ENCODE measurements at regions of chr9 and their contacts with region 1.

Region 1: GRCh38 chr9:4984621-4985385 is at the start of gene JAK2:
- DNase-seq: peak; percentile 79
- ATAC-seq: peak; percentile 83
- H3K4me3 ChIP-seq: peak within 1 kb of the TSS; percentile 76
- H3K27ac ChIP-seq: peak within 1 kb of the TSS; percentile 89
- H3K4me1 ChIP-seq: peaks cover 26% of the 10 kb centered on the region
- H3K27me3 ChIP-seq: no peaks in the 10 kb centered on the region
- CTCF ChIP-seq: peak in 2 of 3 experiments; percentile 44 to 57; a peak in 3 of 6 replicates
- EP300 ChIP-seq: no peak
- POLR2A ChIP-seq: peak; percentile 93
- RAD21 ChIP-seq: peak; percentile 24
- polyA plus RNA-seq, gene JAK2: 4.1 to 4.9 TPM

Region 2: DNA sequence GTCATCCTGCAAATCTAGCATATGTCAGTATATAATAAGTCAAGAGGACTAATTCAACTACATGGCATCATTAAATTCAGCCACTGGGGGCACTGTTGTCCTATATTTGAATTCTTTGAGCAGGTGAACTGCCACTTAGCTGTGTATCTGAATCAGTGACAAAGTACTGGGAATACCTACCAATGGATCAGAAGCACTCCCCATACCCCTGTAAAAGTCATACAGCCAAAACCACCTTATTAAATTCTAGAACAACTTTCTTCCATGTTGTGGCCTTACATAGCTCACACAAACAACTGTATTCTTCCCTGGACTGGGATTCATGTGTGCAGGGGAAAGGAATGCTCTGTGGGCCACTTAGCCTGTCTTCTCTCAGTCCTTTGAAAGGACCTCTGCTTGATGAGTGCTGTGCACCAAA is 380.1 kb before region 1 on chr9:
- CTCF ChIA-PET with region 1: no interaction called
- POLR2A ChIA-PET with region 1: no interaction called
- RAD21 ChIA-PET with region 1: interaction called, 3 read pairs
- SMC1A ChIA-PET with region 1: interaction called, 4 read pairs
- in situ Hi-C with region 1: no loop called
- intact Hi-C with region 1: loop called (anchors 2 kb)
- DNase-seq: peak; percentile 50
- ATAC-seq: peak; percentile 97
- H3K4me3 ChIP-seq: no peak overlapping the region
- H3K27ac ChIP-seq: no peak overlapping the region
- H3K4me1 ChIP-seq: no peaks in the 10 kb centered on the region
- H3K27me3 ChIP-seq: no peaks in the 10 kb centered on the region
- CTCF ChIP-seq: peak; percentile 50 to 75 (median 62)
- EP300 ChIP-seq: no peak
- POLR2A ChIP-seq: no peak
- RAD21 ChIP-seq: peak; percentile 77

Region 3: GRCh38 chr9:4792572-4793458 is 192.0 kb before region 1 on chr9 and contains the start of gene RCL1:
- CTCF ChIA-PET with region 1: interaction called, 4 read pairs
- POLR2A ChIA-PET with region 1: interaction called, 3 read pairs
- RAD21 ChIA-PET with region 1: interaction called, 44 read pairs
- SMC1A ChIA-PET with region 1: interaction called, 12 read pairs
- in situ Hi-C with region 1: no loop called
- intact Hi-C with region 1: loop called (anchors 10 kb)
- DNase-seq: peak; percentile 83
- ATAC-seq: peak; percentile 97
- H3K4me3 ChIP-seq: peak within 1 kb of the TSS; percentile 82
- H3K27ac ChIP-seq: peak within 1 kb of the TSS; percentile 82
- H3K4me1 ChIP-seq: peaks cover 7% of the 10 kb centered on the region
- H3K27me3 ChIP-seq: no peaks in the 10 kb centered on the region
- CTCF ChIP-seq: no peak
- EP300 ChIP-seq: no peak
- POLR2A ChIP-seq: peak; percentile 97
- RAD21 ChIP-seq: peak; percentile 6; the same call in 1 of the 2 replicates
- polyA plus RNA-seq, gene RCL1: 21.1 to 28.6 TPM

Region 4: GRCh38 chr9:4923580-4924544 is 60.9 kb before region 1 on chr9:
- CTCF ChIA-PET with region 1: interaction called, 66 read pairs
- POLR2A ChIA-PET with region 1: interaction called, 4 read pairs
- RAD21 ChIA-PET with region 1: interaction called, 19 read pairs
- SMC1A ChIA-PET with region 1: interaction called, 39 read pairs
- in situ Hi-C with region 1: no loop called
- intact Hi-C with region 1: no loop called
- DNase-seq: no peak
- ATAC-seq: peak; percentile 92
- H3K4me3 ChIP-seq: no peak overlapping the region
- H3K27ac ChIP-seq: no peak overlapping the region
- H3K4me1 ChIP-seq: peaks cover 7% of the 10 kb centered on the region; the same call in 1 of the 2 replicates
- H3K27me3 ChIP-seq: no peaks in the 10 kb centered on the region
- CTCF ChIP-seq: peak; percentile 55 to 70 (median 55)
- EP300 ChIP-seq: no peak
- POLR2A ChIP-seq: no peak
- RAD21 ChIP-seq: peak; percentile 78

Region 5: GRCh38 chr9:5425006-5425628 is 440.3 kb after region 1 on chr9:
- CTCF ChIA-PET with region 1: interaction called, 8 read pairs
- POLR2A ChIA-PET with region 1: no interaction called
- RAD21 ChIA-PET with region 1: interaction called, 4 read pairs
- SMC1A ChIA-PET with region 1: interaction called, 6 read pairs
- in situ Hi-C with region 1: no loop called
- intact Hi-C with region 1: loop called (anchors 5 kb)
- DNase-seq: peak; percentile 30
- ATAC-seq: peak; percentile 77
- H3K4me3 ChIP-seq: no peak overlapping the region
- H3K27ac ChIP-seq: no peak overlapping the region
- H3K4me1 ChIP-seq: no peaks in the 10 kb centered on the region
- H3K27me3 ChIP-seq: no peaks in the 10 kb centered on the region
- CTCF ChIP-seq: peak; percentile 45 to 61 (median 56); a peak in 5 of 6 replicates
- EP300 ChIP-seq: no peak
- POLR2A ChIP-seq: no peak
- RAD21 ChIP-seq: peak; percentile 78

Region 6: DNA sequence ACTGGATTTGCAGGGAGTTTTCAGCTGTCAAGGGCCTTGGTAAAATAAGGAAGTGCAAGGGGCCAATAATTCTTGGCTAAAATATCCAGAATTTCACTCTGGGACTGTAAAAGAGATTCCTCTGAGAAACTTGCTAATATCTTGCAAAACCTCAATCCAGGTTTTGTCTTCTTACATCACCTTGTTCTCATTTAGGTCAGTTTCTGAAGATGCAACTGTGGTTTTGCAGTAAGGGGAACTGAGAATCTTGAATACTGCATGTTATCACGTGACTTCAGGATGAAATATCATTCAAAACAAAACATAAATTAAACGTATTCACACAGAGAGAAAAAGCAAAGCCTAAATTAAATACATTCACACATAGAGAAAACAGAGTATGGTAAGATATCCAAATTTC is 609.1 kb after region 1 on chr9:
- CTCF ChIA-PET with region 1: interaction called, 12 read pairs
- POLR2A ChIA-PET with region 1: no interaction called
- RAD21 ChIA-PET with region 1: interaction called, 9 read pairs
- SMC1A ChIA-PET with region 1: interaction called, 11 read pairs
- in situ Hi-C with region 1: loop called (anchors 5 kb)
- intact Hi-C with region 1: loop called (anchors 5 kb)
- DNase-seq: peak; percentile 90
- ATAC-seq: peak; percentile 55
- H3K4me3 ChIP-seq: 0 out of 2 replicates have a peak overlapping the region, but pooled peaks have one; percentile 9
- H3K27ac ChIP-seq: peak overlapping the region; percentile 93
- H3K4me1 ChIP-seq: peaks cover 51% of the 10 kb centered on the region
- H3K27me3 ChIP-seq: no peaks in the 10 kb centered on the region
- CTCF ChIP-seq: no peak
- EP300 ChIP-seq: peak; percentile 100
- POLR2A ChIP-seq: no peak
- RAD21 ChIP-seq: peak; percentile 11; the same call in 1 of the 2 replicates